Heart left ventricle (tissue), 16 donors: ENCODE measurements at regions of chr1 and their contacts with region 1.

Region 1: GRCh38 chr1:236543065-236543669 is 19.4 kb downstream of the LGALS8 start:
- DNase-seq: peak in 2 of 5 donors; percentile 20 to 35
- ATAC-seq: peak in 3 of 4 donors; percentile 12 to 33 (median 29)
- H3K4me3 ChIP-seq: no peak overlapping the region
- H3K27ac ChIP-seq: no peak overlapping the region
- H3K4me1 ChIP-seq: no peaks in the 10 kb centered on the region
- H3K27me3 ChIP-seq: no peaks in the 10 kb centered on the region
- CTCF ChIP-seq: no peak
- POLR2A ChIP-seq: no peak

Region 2: GRCh38 chr1:236581528-236581927 is 38.4 kb after region 1 on chr1:
- intact Hi-C with region 1: loop called in 1 of 10 experiments (anchors 5 kb)
- DNase-seq: no peak
- ATAC-seq: peak; percentile 47 to 54 (median 51)
- H3K4me3 ChIP-seq: no peak overlapping the region
- H3K27ac ChIP-seq: no peak overlapping the region
- H3K4me1 ChIP-seq: peaks cover 0 to 4% (median 0%) of the 10 kb centered on the region in 12 donors
- H3K27me3 ChIP-seq: no peaks in the 10 kb centered on the region
- CTCF ChIP-seq: no peak
- POLR2A ChIP-seq: no peak

Region 3: GRCh38 chr1:236590553-236591150 is 47.5 kb after region 1 on chr1:
- intact Hi-C with region 1: loop called in 1 of 10 experiments (anchors 10 kb)
- DNase-seq: no peak
- ATAC-seq: no peak
- H3K4me3 ChIP-seq: no peak overlapping the region
- H3K27ac ChIP-seq: no peak overlapping the region
- H3K4me1 ChIP-seq: no peaks in the 10 kb centered on the region
- H3K27me3 ChIP-seq: no peaks in the 10 kb centered on the region
- CTCF ChIP-seq: no peak
- POLR2A ChIP-seq: no peak

Region 4: GRCh38 chr1:236673289-236673919 is 130.2 kb after region 1 on chr1:
- intact Hi-C with region 1: no loop called
- DNase-seq: no peak
- ATAC-seq: peak; percentile 32 to 87 (median 66)
- H3K4me3 ChIP-seq: peak overlapping the region in 5 of 12 donors; percentile 20 to 45 (median 23)
- H3K27ac ChIP-seq: peak overlapping the region in 4 of 12 donors; percentile 1 to 29 (median 15)
- H3K4me1 ChIP-seq: peaks cover 0 to 16% (median 6%) of the 10 kb centered on the region in 12 donors
- H3K27me3 ChIP-seq: no peaks in the 10 kb centered on the region
- CTCF ChIP-seq: no peak
- POLR2A ChIP-seq: no peak